ENCODE measurements at regions of chr1 and their contacts with region 1.

Region 1: DNA sequence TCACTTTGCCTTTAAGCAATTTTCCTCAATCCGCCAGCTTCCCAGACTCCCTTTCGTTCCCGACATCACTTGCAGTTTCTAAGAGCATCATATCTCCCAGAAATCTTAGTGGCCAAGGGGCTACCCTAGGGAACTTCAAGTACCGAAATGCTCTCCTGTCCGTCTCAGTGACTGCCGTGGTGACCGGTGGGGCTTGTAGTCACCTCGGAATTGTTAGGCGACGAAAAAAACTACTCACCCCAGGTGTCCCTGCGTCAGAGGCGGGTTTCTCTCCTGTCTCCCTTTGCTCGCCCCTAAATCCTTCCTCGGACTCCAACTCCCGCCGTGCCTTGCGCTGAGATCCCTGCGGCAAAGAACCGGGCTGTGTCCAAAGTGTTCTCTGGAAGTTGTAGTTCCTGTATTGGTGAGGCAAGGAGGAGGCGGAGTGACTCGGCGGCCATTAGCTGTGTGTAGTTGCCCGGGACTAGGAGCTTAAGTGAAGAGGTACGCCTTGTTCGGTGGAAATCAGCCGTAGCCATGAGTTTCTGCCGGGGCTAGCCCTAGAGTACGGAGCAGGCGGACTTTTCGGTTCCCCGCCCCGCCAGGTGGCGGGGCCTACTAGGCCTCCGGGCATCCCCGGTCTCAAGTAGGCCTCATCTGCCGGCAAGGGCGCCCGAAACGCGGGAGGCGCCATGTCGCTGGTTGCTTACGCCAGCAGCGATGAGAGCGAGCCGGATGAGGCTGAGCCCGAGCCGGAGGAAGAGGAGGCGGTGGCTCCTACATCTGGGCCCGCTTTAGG is at the start of gene PRCC:
- DNase-seq: peak; percentile 91 to 100 (median 96)
- ATAC-seq: peak; percentile 88
- H3K4me3 ChIP-seq: peak within 1 kb of the TSS; percentile 87
- H3K4me3 Mint-ChIP-seq: no peak within 1 kb of the TSS
- H3K27ac ChIP-seq: peak within 1 kb of the TSS; percentile 96
- H3K27ac Mint-ChIP-seq: no peak within 1 kb of the TSS
- H3K4me1 ChIP-seq: peaks cover 42% of the 10 kb centered on the region
- H3K4me1 Mint-ChIP-seq: peaks cover 37% of the 10 kb centered on the region
- H3K27me3 ChIP-seq: no peaks in the 10 kb centered on the region
- H3K27me3 Mint-ChIP-seq: no peaks in the 10 kb centered on the region
- CTCF ChIP-seq: no peak
- total RNA-seq, gene PRCC: 49.5 to 50.0 TPM

Region 2: DNA sequence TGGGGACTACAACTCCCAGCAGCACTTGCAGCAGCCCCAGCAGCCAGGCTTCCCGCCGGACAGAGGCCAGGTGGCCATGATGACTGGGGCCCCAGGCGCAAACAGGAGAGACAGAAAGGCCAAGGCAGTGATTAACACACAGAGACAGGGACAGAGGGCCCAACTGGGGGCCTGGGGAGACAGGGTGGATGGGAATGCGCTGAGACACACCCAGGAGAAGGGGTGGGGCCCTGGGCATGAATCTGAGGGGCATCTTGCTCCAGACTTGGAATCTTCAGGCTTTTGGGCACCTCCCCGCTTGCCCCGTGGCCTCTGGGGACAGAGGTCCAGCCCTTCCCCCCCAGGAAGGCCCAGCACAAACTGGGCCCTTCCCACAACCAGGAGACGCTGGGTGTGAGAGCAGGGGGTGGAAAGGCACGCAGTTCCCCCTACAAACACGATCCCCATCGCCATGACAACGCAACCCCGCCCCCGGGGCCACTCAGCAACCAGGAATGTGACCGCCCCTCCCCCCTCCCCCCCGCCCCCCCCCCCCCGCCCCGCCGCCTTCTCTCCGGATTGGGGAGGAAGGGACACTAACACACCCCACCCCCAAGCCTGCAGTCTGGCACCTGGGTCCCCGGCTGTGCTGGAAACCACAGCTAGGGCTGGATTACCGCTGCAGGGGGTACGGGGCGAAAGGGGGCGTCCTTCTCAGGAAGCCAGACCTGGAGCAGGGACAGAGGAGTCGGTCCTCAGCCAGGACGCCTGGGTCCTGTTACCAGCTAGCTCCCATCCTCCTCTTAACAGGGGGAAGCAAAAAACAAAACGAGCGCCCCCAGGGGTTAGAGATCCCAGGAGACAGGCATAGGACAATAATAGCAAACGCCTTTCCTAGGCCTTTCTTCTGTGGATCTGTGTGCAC is 20.3 kb before region 1 on chr1:
- CTCF ChIA-PET with region 1: interaction called, 8 read pairs
- POLR2A ChIA-PET with region 1: interaction called, 169 read pairs
- intact Hi-C with region 1: loop called in 1 of 2 experiments (anchors 1 kb)
- DNase-seq: peak; percentile 19 to 84 (median 55)
- ATAC-seq: no peak
- H3K4me3 ChIP-seq: peak overlapping the region; percentile 97
- H3K4me3 Mint-ChIP-seq: peak overlapping the region; percentile 96
- H3K27ac ChIP-seq: peak overlapping the region; percentile 73 to 90
- H3K27ac Mint-ChIP-seq: peak overlapping the region; percentile 85
- H3K4me1 ChIP-seq: peaks cover 61% of the 10 kb centered on the region
- H3K4me1 Mint-ChIP-seq: peaks cover 61% of the 10 kb centered on the region
- H3K27me3 ChIP-seq: no peaks in the 10 kb centered on the region
- H3K27me3 Mint-ChIP-seq: no peaks in the 10 kb centered on the region
- CTCF ChIP-seq: no peak

Region 3: GRCh38 chr1:156751758-156752757 is 15.2 kb before region 1 on chr1:
- CTCF ChIA-PET with region 1: interaction called, 8 read pairs
- POLR2A ChIA-PET with region 1: interaction called, 46 read pairs
- intact Hi-C with region 1: loop called in 1 of 2 experiments (anchors 1 kb)
- DNase-seq: peak; percentile 95 to 99 (median 98)
- ATAC-seq: peak; percentile 85
- H3K4me3 ChIP-seq: peak overlapping the region; percentile 97
- H3K4me3 Mint-ChIP-seq: peak overlapping the region; percentile 91
- H3K27ac ChIP-seq: peak overlapping the region; percentile 61 to 86
- H3K27ac Mint-ChIP-seq: peak overlapping the region; percentile 85
- H3K4me1 ChIP-seq: peaks cover 49% of the 10 kb centered on the region
- H3K4me1 Mint-ChIP-seq: peaks cover 60% of the 10 kb centered on the region
- H3K27me3 ChIP-seq: no peaks in the 10 kb centered on the region
- H3K27me3 Mint-ChIP-seq: no peaks in the 10 kb centered on the region
- CTCF ChIP-seq: no peak